B cell (primary cell): ENCODE measurements at regions of chr5 and their contacts with region 1.

Region 1: GRCh38 chr5:140401362-140402257 is at the start of gene ANKHD1:
- DNase-seq: peak; percentile 100
- ATAC-seq: peak; percentile 77
- H3K4me3 ChIP-seq: peak within 1 kb of the TSS; percentile 80 to 98 (median 92)
- H3K4me3 Mint-ChIP-seq: no peak within 1 kb of the TSS
- H3K27ac ChIP-seq: peak within 1 kb of the TSS; percentile 84 to 91
- H3K27ac Mint-ChIP-seq: no peak within 1 kb of the TSS
- H3K4me1 ChIP-seq: peaks cover 31% of the 10 kb centered on the region in 2 donors
- H3K4me1 Mint-ChIP-seq: peaks cover 31% of the 10 kb centered on the region
- H3K27me3 ChIP-seq: no peaks in the 10 kb centered on the region
- H3K27me3 Mint-ChIP-seq: no peaks in the 10 kb centered on the region
- CTCF ChIP-seq: no peak
- total RNA-seq, gene ANKHD1: 244 and 246 TPM in 2 replicates

Region 2: DNA sequence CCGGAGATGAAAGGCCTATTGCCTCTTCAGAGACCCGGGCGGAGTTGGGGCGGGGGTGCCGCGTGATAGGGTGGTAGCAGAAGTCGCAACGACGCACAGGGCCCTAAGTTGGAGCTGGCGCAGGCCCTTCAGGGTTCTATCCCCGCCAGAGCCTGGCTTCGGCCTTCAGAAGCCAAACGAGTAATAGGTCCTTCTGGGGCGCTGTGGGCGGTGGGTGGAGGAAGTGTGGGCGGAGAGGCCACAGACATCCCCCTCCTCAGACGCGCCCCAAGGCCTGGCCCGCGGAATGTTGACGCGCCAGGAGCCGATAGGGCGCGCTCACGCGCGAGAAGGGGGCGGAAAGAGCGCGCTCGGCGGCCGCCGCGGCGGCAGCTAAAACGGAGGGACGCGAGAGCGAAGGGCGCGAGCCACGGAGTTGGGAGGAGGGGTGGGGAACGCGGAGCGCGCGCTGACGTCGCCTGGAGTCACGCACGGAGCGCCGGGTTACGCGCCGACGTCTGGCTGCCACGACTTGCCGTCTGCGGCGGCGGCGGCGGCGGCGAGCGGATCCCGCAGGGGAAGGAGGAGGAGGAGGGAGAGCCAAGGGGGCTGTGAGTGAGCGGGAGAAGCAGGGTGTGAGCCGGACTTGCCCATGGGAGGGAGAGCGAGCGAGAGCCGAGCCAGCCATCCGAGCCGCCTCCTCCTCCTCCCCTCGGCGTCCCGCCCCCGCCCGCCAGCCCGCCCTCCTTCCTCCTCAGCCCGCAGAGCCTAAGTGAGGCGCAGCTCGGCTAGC is 294.1 kb before region 1 on chr5:
- CTCF ChIA-PET with region 1: no interaction called
- POLR2A ChIA-PET with region 1: no interaction called
- intact Hi-C with region 1: loop called (anchors 2 kb)
- DNase-seq: peak; percentile 98
- ATAC-seq: peak; percentile 85
- H3K4me3 ChIP-seq: peak overlapping the region in 4 of 5 experiments; percentile 60 to 75 (median 68)
- H3K4me3 Mint-ChIP-seq: peak overlapping the region; percentile 96
- H3K27ac ChIP-seq: peak overlapping the region; percentile 97 to 99
- H3K27ac Mint-ChIP-seq: peak overlapping the region; percentile 99
- H3K4me1 ChIP-seq: peaks cover 35% of the 10 kb centered on the region in 2 donors
- H3K4me1 Mint-ChIP-seq: peaks cover 46% of the 10 kb centered on the region
- H3K27me3 ChIP-seq: peaks cover 5 to 23% (median 13%) of the 10 kb centered on the region in 4 experiments
- H3K27me3 Mint-ChIP-seq: peaks cover 20% of the 10 kb centered on the region
- CTCF ChIP-seq: peak; percentile 43

Region 3: GRCh38 chr5:140284013-140284412 is 117.6 kb before region 1 on chr5:
- CTCF ChIA-PET with region 1: no interaction called
- POLR2A ChIA-PET with region 1: no interaction called
- intact Hi-C with region 1: loop called (anchors 5 kb)
- DNase-seq: no peak
- ATAC-seq: no peak
- H3K4me3 ChIP-seq: peak overlapping the region in 1 of 5 experiments; percentile 66
- H3K4me3 Mint-ChIP-seq: peak overlapping the region; percentile 88
- H3K27ac ChIP-seq: peak overlapping the region in 1 of 2 donors; percentile 60
- H3K27ac Mint-ChIP-seq: peak overlapping the region; percentile 59
- H3K4me1 ChIP-seq: peaks cover 15 to 19% of the 10 kb centered on the region in 2 donors
- H3K4me1 Mint-ChIP-seq: peaks cover 27% of the 10 kb centered on the region
- H3K27me3 ChIP-seq: no peaks in the 10 kb centered on the region
- H3K27me3 Mint-ChIP-seq: no peaks in the 10 kb centered on the region
- CTCF ChIP-seq: no peak

Region 4: GRCh38 chr5:140557136-140557805 is 155.7 kb after region 1 on chr5 and contains the start of gene SRA1:
- CTCF ChIA-PET with region 1: no interaction called
- POLR2A ChIA-PET with region 1: no interaction called
- intact Hi-C with region 1: loop called (anchors 2 kb)
- DNase-seq: peak; percentile 88
- ATAC-seq: peak; percentile 97
- H3K4me3 ChIP-seq: peak within 1 kb of the TSS; percentile 62 to 90 (median 78)
- H3K4me3 Mint-ChIP-seq: peak within 1 kb of the TSS; percentile 94
- H3K27ac ChIP-seq: peak within 1 kb of the TSS; percentile 85 to 90
- H3K27ac Mint-ChIP-seq: peak within 1 kb of the TSS; percentile 93
- H3K4me1 ChIP-seq: peaks cover 18 to 28% of the 10 kb centered on the region in 2 donors
- H3K4me1 Mint-ChIP-seq: peaks cover 47% of the 10 kb centered on the region
- H3K27me3 ChIP-seq: no peaks in the 10 kb centered on the region
- H3K27me3 Mint-ChIP-seq: no peaks in the 10 kb centered on the region
- CTCF ChIP-seq: no peak
- total RNA-seq, gene SRA1: 25.6 and 27.1 TPM in 2 replicates

Region 5: DNA sequence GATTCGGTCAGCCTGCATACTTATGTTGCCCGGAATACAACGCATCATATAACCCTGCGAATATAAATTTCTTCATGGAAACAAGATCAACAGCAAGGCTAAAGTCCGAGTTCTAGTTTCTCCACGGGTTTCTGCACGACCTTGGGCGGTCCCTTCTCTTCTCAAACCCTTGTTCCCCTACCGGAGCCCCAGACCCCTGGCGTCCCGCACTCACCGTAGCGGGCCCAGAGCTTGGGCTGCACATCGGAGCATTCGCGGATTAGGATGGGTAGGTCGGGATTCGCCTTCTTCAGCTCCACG is 245.4 kb after region 1 on chr5:
- CTCF ChIA-PET with region 1: interaction called, 6 read pairs
- POLR2A ChIA-PET with region 1: interaction called, 9 read pairs
- intact Hi-C with region 1: loop called (anchors 1 kb)
- DNase-seq: no peak
- ATAC-seq: no peak
- H3K4me3 ChIP-seq: peak overlapping the region; percentile 81 to 94 (median 89)
- H3K4me3 Mint-ChIP-seq: peak overlapping the region; percentile 99
- H3K27ac ChIP-seq: peak overlapping the region; percentile 88 to 93
- H3K27ac Mint-ChIP-seq: peak overlapping the region; percentile 98
- H3K4me1 ChIP-seq: peaks cover 15 to 20% of the 10 kb centered on the region in 2 donors
- H3K4me1 Mint-ChIP-seq: peaks cover 36% of the 10 kb centered on the region
- H3K27me3 ChIP-seq: no peaks in the 10 kb centered on the region
- H3K27me3 Mint-ChIP-seq: no peaks in the 10 kb centered on the region
- CTCF ChIP-seq: no peak

Region 6: GRCh38 chr5:140700177-140701144 is 298.9 kb after region 1 on chr5 and contains the start of gene ZMAT2:
- CTCF ChIA-PET with region 1: no interaction called
- POLR2A ChIA-PET with region 1: no interaction called
- intact Hi-C with region 1: loop called (anchors 1 kb)
- DNase-seq: peak; percentile 96
- ATAC-seq: peak; percentile 99
- H3K4me3 ChIP-seq: peak within 1 kb of the TSS; percentile 58 to 97 (median 92)
- H3K4me3 Mint-ChIP-seq: peak within 1 kb of the TSS; percentile 96
- H3K27ac ChIP-seq: peak within 1 kb of the TSS; percentile 46 to 77
- H3K27ac Mint-ChIP-seq: peak within 1 kb of the TSS; percentile 91
- H3K4me1 ChIP-seq: peaks cover 13 to 16% of the 10 kb centered on the region in 2 donors
- H3K4me1 Mint-ChIP-seq: peaks cover 23% of the 10 kb centered on the region
- H3K27me3 ChIP-seq: no peaks in the 10 kb centered on the region
- H3K27me3 Mint-ChIP-seq: no peaks in the 10 kb centered on the region
- CTCF ChIP-seq: no peak
- total RNA-seq, gene ZMAT2: 55.7 and 55.8 TPM in 2 replicates